Activated naive CD4-positive, alpha-beta T cell treated with anti-CD3 and anti-CD28 coated beads for 36 hours (primary cell): ENCODE measurements at regions of chr9 and their contacts with region 1.

Region 1: DNA sequence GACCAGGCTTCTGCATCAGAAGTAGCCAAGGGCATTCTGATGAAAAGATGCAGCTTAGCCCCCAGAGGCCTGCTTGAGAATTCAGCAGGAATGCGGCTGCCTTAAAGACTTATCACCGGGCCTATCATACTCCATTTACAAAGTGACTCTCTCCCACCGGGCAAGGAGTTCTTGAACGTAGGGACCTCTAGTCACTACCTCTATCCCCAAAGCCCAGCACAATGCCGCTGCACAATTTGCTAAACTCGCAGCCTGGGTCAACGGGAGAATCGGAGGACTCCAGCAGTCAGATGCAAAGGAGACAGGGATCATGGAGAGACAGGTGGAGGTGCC is 661 bp downstream of the PDCL start:
- DNase-seq: no peak
- H3K4me3 Mint-ChIP-seq: peak overlapping the region; percentile 98
- H3K27ac Mint-ChIP-seq: peak overlapping the region; percentile 90
- H3K4me1 Mint-ChIP-seq: peaks cover 25% of the 10 kb centered on the region
- H3K27me3 Mint-ChIP-seq: no peaks in the 10 kb centered on the region

Region 2: DNA sequence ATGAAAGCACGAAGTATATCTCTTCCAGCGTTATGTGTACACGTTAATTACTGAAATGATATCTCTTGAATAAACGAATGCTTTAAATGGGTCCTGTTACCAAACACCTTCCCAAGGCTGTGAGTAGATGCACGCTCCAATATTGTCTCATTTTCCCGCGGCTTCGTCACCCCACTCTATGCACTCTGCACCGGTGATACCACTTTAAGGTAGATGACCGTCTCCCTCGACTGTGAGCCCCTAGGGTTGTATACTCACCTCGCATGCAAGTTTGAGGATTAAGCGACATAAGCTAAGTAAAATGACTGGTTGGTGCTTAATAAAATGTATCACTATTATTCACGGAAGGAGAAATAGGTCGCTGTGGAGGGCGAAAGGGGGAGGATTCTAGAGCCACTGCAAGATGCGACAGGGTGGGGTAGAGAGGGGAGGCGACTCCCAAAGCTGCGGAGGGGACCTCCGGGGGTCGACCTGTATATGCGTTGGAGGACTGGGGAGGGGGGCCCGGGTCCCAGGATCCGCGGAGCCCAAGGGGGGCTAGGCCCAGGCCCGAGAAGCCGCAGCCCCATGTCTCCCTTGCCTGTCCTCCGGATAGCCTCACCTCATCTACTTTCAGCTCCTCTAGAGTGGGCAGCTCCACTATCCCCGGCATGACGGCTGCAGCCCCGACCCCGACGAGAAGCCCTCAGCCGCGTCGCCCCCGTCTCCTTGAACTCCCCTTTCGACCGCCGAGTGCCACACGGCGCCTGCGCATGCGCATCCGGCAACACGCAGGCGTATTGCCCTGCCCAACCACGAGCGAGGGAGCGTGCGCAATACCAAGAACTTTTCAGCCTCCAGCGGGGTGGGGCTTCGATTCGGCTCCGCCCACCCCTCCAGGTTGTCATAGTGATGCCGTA is 668.5 kb before region 1 on chr9 and contains the starts of genes MORN5 and NDUFA8:
- CTCF ChIA-PET with region 1: no interaction called
- intact Hi-C with region 1: loop called (anchors 1 kb)
- DNase-seq: peak; percentile 96
- H3K4me3 Mint-ChIP-seq: peak within 1 kb of the TSS; percentile 99
- H3K27ac Mint-ChIP-seq: peak within 1 kb of the TSS; percentile 86
- H3K4me1 Mint-ChIP-seq: peaks cover 34% of the 10 kb centered on the region
- H3K27me3 Mint-ChIP-seq: peaks cover 6% of the 10 kb centered on the region
- total RNA-seq, gene MORN5: not detected
- total RNA-seq, gene NDUFA8: 45.5 to 47.9 TPM

Region 3: DNA sequence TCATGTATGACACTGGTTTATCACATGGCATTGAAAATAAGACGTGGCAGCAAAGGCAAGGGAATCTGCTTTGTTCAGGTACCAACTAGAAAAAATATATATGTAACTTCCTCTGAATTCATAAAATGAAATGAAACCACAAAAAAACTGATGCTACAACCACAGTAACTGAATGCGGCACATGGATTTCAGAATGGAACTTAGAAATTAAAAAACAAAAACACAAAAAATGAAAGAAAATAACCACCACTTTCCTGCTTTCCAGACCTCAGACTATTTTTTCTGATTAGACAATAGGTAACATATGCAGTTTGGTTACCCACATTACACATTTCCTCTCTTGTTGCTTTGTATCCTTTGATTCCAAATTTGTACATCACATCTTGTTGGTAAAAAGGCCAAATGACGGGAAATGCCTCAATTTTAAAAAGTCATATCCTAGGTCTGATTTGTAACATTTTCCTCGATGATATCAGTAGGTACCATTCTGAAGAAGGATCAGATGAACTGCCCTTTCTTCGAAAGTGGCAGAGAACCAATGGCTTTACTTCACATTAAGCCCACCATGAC is 18.7 kb after region 1 on chr9:
- CTCF ChIA-PET with region 1: interaction called, 4 read pairs
- intact Hi-C with region 1: loop called (anchors 2 kb)
- DNase-seq: no peak
- H3K4me3 Mint-ChIP-seq: no peak overlapping the region
- H3K27ac Mint-ChIP-seq: peak overlapping the region; percentile 79
- H3K4me1 Mint-ChIP-seq: peaks cover 28% of the 10 kb centered on the region
- H3K27me3 Mint-ChIP-seq: no peaks in the 10 kb centered on the region

Region 4: DNA sequence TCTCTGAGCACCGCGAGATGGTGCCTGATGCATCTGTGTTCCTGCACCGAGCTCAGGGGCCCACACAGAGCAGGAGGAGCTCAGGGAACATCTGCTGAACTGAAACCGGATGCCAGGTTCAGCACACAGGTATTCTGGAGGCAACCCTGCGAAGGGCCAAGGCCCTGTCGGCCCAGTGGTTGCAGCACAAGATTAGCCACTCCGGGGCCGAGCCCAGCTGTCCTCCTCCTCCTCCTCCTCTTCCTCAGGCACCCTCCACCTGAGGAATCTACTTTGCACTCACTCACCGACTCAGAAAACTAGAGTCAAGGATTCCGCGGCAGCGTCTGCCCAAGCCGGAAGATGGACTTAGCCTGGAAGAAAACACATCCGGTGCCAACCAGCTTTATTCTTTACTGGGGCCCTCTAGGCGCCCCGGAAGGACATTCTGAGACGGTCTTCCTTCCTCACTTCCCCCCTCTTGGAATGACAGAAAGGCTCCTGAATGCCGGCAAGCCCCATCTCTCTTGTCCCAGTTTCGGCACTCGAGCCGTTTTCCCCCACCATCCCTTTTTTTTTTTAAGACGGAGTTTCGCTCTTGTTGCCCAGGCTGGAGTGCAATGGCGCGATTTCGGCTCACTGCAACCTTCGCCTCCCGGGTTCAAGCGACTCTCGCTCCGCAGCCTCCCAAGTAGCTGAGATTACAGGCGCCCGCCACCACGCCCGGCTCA is 85.4 kb after region 1 on chr9 and contains the start of gene ZBTB6:
- CTCF ChIA-PET with region 1: no interaction called
- intact Hi-C with region 1: loop called (anchors 2 kb)
- DNase-seq: peak; percentile 86
- H3K4me3 Mint-ChIP-seq: peak within 1 kb of the TSS; percentile 96
- H3K27ac Mint-ChIP-seq: peak within 1 kb of the TSS; percentile 92
- H3K4me1 Mint-ChIP-seq: peaks cover 26% of the 10 kb centered on the region
- H3K27me3 Mint-ChIP-seq: no peaks in the 10 kb centered on the region
- total RNA-seq, gene ZBTB6: 7.7 to 8.0 TPM

Region 5: DNA sequence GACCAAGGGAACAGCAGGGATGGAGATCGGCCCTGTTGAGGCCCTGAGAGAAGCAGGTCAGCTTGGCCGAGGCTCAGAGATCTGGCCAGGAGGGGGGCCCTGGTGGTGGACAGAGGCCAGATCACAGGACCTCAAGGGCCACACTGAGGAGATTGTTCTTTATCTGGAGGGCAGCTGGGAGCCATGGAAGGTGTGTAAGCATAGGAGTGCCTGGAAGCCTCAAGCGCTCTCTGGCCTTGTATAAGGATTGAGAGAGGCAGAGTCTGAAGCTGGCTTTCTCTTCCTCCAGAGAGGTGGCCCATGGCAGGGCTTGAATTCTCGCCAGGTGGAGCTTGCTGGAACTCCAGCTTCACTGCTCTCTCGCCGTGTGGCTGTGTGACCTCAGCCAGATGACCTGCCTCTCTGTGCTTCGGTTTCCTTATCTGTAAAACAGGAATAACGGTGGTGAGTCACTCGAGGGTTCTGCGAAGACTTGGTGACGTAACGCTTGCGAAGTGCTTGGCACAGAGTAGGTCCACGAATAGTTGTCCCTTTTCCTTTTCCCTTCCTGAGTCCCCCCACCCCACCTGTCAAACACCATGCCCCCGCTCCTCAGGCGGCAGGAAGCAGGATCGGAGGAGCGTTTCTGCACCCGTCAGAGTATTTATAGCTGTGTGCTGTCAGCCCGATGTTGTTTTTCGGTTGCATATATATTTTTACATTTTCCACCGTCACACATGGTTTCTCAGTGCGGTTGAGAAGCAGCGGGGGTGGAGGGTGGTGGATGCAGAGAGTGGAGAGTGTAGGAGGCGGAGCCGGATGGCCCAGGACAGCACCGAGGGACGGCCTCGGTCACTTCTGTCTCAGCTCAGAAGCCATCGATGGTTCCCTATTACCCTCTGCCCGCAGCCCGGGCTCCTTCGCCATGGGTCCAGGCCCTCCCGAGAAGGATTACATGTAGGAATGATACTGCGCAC is 511.3 kb after region 1 on chr9:
- CTCF ChIA-PET with region 1: no interaction called
- intact Hi-C with region 1: loop called (anchors 5 kb)
- DNase-seq: peak; percentile 82
- H3K4me3 Mint-ChIP-seq: peak overlapping the region; percentile 77
- H3K27ac Mint-ChIP-seq: peak overlapping the region; percentile 97
- H3K4me1 Mint-ChIP-seq: peaks cover 35% of the 10 kb centered on the region
- H3K27me3 Mint-ChIP-seq: no peaks in the 10 kb centered on the region